Spleen (tissue), 13 donors: ENCODE measurements at regions of chr3 and their contacts with region 1.

Region 1: GRCh38 chr3:38247366-38248035 is 18.1 kb upstream of the SLC22A13 start:
- DNase-seq: no peak
- H3K4me3 ChIP-seq: no peak overlapping the region
- H3K27ac ChIP-seq: no peak overlapping the region
- H3K4me1 ChIP-seq: no peaks in the 10 kb centered on the region
- H3K27me3 ChIP-seq: no peaks in the 10 kb centered on the region
- CTCF ChIP-seq: no peak
- POLR2A ChIP-seq: no peak

Region 2: GRCh38 chr3:38140314-38141172 is 107.0 kb before region 1 on chr3:
- intact Hi-C with region 1: loop called (anchors 10 kb)
- DNase-seq: no peak
- H3K4me3 ChIP-seq: peak overlapping the region in 5 of 8 donors; percentile 82 to 99 (median 94)
- H3K27ac ChIP-seq: peak overlapping the region in 3 of 8 donors; percentile 93 to 97 (median 95)
- H3K4me1 ChIP-seq: peaks cover 21 to 74% (median 41%) of the 10 kb centered on the region in 6 donors
- H3K27me3 ChIP-seq: no peaks in the 10 kb centered on the region
- CTCF ChIP-seq: no peak
- POLR2A ChIP-seq: no peak